HEK293T (cell line): ENCODE measurements at regions of chr7 and their contacts with region 1.

Region 1: GRCh38 chr7:139602143-139602722 is 78.7 kb downstream of the CLEC2L start:
- DNase-seq: peak; percentile 58

Region 2: GRCh38 chr7:139588632-139589031 is 13.6 kb before region 1 on chr7:
- CTCF ChIA-PET with region 1: interaction called, 28 read pairs
- POLR2A ChIA-PET with region 1: no interaction called
- DNase-seq: no peak

Region 3: DNA sequence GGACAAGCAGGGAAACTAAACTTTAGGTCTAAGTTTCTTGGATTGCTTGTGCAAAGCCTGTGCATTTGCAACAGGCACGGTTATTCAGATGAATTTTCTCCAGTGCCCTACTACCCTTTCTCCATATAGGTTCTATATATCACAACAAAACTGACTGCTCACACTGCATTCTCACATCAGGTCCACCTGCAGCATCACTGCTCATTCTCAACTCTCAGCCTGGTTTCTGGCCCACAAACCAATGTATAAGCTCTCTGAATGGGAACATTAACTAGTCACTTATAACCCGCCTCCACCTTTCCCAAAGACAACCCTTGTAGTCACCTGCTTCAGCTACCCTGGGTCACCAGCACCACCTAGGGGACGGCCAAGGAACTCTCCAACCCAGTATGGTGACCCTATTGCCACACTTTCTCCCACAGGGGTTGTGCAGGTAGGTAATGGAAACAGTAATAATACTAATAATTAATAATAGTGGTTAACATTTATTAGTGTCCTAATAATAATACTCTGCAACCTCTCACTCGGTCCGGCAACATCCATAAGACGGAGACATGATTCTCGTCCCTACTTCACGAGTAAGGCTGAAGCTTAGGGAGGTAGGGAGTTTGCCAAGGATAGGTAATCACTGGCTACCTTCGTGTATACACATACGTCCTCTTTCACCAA is 18.6 kb after region 1 on chr7:
- CTCF ChIA-PET with region 1: interaction called, 11 read pairs
- POLR2A ChIA-PET with region 1: no interaction called
- DNase-seq: peak; percentile 85